ENCODE measurements at regions of chr11 and their contacts with region 1.

Region 1: GRCh38 chr11:68297812-68298658 is 14.4 kb upstream of the LRP5 start:
- DNase-seq: peak; percentile 73
- H3K4me3 Mint-ChIP-seq: no peak overlapping the region
- H3K27ac Mint-ChIP-seq: no peak overlapping the region
- H3K4me1 Mint-ChIP-seq: no peaks in the 10 kb centered on the region
- H3K27me3 Mint-ChIP-seq: no peaks in the 10 kb centered on the region

Region 2: GRCh38 chr11:68213555-68214174 is 84.4 kb before region 1 on chr11:
- CTCF ChIA-PET with region 1: interaction called, 14 read pairs
- intact Hi-C with region 1: loop called (anchors 1 kb)
- DNase-seq: peak; percentile 71
- H3K4me3 Mint-ChIP-seq: peak overlapping the region; percentile 73
- H3K27ac Mint-ChIP-seq: no peak overlapping the region
- H3K4me1 Mint-ChIP-seq: peaks cover 42% of the 10 kb centered on the region
- H3K27me3 Mint-ChIP-seq: peaks cover 7% of the 10 kb centered on the region

Region 3: GRCh38 chr11:68257475-68258362 is 40.3 kb before region 1 on chr11:
- CTCF ChIA-PET with region 1: interaction called, 151 read pairs
- intact Hi-C with region 1: loop called (anchors 1 kb)
- DNase-seq: peak; percentile 97
- H3K4me3 Mint-ChIP-seq: no peak overlapping the region
- H3K27ac Mint-ChIP-seq: no peak overlapping the region
- H3K4me1 Mint-ChIP-seq: peaks cover 2% of the 10 kb centered on the region
- H3K27me3 Mint-ChIP-seq: no peaks in the 10 kb centered on the region

Region 4: GRCh38 chr11:68271781-68272608 is 26.0 kb before region 1 on chr11 and contains the start of gene C11orf24:
- CTCF ChIA-PET with region 1: interaction called, 62 read pairs
- intact Hi-C with region 1: loop called (anchors 1 kb)
- DNase-seq: peak; percentile 93
- H3K4me3 Mint-ChIP-seq: peak within 1 kb of the TSS; percentile 96
- H3K27ac Mint-ChIP-seq: peak within 1 kb of the TSS; percentile 90
- H3K4me1 Mint-ChIP-seq: peaks cover 34% of the 10 kb centered on the region
- H3K27me3 Mint-ChIP-seq: no peaks in the 10 kb centered on the region
- total RNA-seq, gene C11orf24: 28.5 to 29.5 TPM

Region 5: GRCh38 chr11:68287419-68287818 is 10.6 kb before region 1 on chr11:
- CTCF ChIA-PET with region 1: interaction called, 15 read pairs
- intact Hi-C with region 1: no loop called
- DNase-seq: no peak
- H3K4me3 Mint-ChIP-seq: no peak overlapping the region
- H3K27ac Mint-ChIP-seq: no peak overlapping the region
- H3K4me1 Mint-ChIP-seq: peaks cover 12% of the 10 kb centered on the region
- H3K27me3 Mint-ChIP-seq: no peaks in the 10 kb centered on the region